ENCODE measurements at regions of chr16 and their contacts with region 1.

Region 1: GRCh38 chr16:81623363-81624102 is 155.6 kb upstream of the PLCG2 start:
- DNase-seq: peak; percentile 37 to 81
- ATAC-seq: peak; percentile 66 to 70 (median 69)
- H3K4me3 ChIP-seq: no peak overlapping the region
- H3K4me3 Mint-ChIP-seq: no peak overlapping the region
- H3K27ac ChIP-seq: no peak overlapping the region
- H3K27ac Mint-ChIP-seq: peak overlapping the region in 1 of 2 donors; percentile 56
- H3K4me1 ChIP-seq: peaks cover 8% of the 10 kb centered on the region
- H3K4me1 Mint-ChIP-seq: no peaks in the 10 kb centered on the region
- H3K27me3 ChIP-seq: no peaks in the 10 kb centered on the region
- H3K27me3 Mint-ChIP-seq: no peaks in the 10 kb centered on the region
- CTCF ChIP-seq: peak; percentile 64

Region 2: DNA sequence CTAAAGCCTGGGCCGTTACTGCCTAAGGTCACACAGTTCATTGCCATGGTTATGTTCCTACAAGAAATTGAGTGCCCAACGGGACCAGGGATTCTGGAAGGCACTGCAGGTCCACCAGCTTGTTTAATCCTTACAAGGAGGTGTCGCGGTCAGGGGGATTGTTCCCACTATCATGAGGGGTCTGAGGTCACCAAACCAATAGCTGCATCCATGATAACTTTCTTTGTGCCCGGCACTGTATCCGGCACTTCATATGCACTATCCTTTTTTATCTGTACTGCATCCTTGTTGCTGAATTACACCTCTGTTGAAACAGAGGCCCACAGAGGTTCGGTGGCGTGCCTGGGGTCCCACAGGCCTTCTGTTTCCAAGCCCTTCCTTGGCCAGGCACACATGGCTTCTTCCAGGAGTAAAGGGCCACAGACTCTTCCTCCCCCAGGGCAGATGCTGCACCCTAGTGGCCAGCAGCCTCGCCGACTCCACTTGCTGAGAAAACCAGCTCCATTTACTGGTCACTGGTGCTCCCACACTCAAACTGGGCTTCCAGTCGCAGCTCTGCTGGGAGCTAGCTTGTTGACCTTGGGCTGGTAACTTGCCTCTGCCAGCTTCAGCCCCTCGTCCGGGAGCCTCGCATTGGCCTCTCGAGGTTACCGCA is 73.6 kb after region 1 on chr16:
- intact Hi-C with region 1: no loop called
- DNase-seq: peak; percentile 28 to 57
- ATAC-seq: peak; percentile 43 to 59 (median 52)
- H3K4me3 ChIP-seq: no peak overlapping the region
- H3K4me3 Mint-ChIP-seq: no peak overlapping the region
- H3K27ac ChIP-seq: no peak overlapping the region
- H3K27ac Mint-ChIP-seq: no peak overlapping the region
- H3K4me1 ChIP-seq: no peaks in the 10 kb centered on the region
- H3K4me1 Mint-ChIP-seq: no peaks in the 10 kb centered on the region
- H3K27me3 ChIP-seq: no peaks in the 10 kb centered on the region
- H3K27me3 Mint-ChIP-seq: no peaks in the 10 kb centered on the region
- CTCF ChIP-seq: peak; percentile 43

Region 3: DNA sequence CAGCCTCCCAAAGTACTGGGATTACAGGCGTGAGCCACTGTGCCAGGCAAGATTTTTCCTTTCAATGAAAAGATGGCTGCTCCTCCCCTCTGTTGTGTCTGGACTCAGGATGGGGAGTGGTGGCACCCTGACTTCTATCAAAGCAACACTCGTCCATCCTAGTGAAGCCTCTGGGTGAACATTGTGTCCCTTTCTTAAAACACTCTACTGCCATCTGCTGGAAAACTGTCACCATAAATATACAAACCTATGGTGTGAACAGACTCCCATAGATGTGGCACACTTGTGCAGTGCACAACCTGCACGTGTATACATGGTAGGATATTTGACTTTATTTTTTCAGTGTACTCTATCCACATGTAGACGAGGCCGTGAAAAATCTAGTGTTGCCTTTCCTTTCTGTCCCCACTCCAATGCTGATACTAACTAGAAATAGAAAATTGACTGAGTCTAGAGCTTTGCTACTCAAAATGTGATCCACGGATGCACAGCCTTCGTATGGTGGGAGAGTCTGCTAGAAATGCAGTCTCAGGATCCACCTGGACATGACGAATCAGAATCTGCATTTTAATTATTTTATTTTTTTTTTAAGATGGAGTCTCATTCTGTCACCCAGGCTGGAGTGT is 99.7 kb after region 1 on chr16:
- intact Hi-C with region 1: loop called (anchors 1 kb)
- DNase-seq: peak in 1 of 2 donors; percentile 88
- ATAC-seq: peak; percentile 83 to 86 (median 85)
- H3K4me3 ChIP-seq: no peak overlapping the region
- H3K4me3 Mint-ChIP-seq: no peak overlapping the region
- H3K27ac ChIP-seq: no peak overlapping the region
- H3K27ac Mint-ChIP-seq: no peak overlapping the region
- H3K4me1 ChIP-seq: peaks cover 14% of the 10 kb centered on the region
- H3K4me1 Mint-ChIP-seq: peaks cover 0 to 17% of the 10 kb centered on the region in 2 donors
- H3K27me3 ChIP-seq: no peaks in the 10 kb centered on the region
- H3K27me3 Mint-ChIP-seq: no peaks in the 10 kb centered on the region
- CTCF ChIP-seq: peak; percentile 74

Measured in natural killer cell (primary cell).